Activated T-helper 2 cell treated with anti-CD3 and anti-CD28 coated beads, Interferon-gamma antibody, Interleukin-2, Interleukin-4, amounts not matched to agents 10 μg/mL and 5 μg/mL and 100 μg/mL, durations not matched to agents 14 hours and 24 hours and 36 hours (primary cell): ENCODE measurements at regions of chr2 and their contacts with region 1.

Region 1: DNA sequence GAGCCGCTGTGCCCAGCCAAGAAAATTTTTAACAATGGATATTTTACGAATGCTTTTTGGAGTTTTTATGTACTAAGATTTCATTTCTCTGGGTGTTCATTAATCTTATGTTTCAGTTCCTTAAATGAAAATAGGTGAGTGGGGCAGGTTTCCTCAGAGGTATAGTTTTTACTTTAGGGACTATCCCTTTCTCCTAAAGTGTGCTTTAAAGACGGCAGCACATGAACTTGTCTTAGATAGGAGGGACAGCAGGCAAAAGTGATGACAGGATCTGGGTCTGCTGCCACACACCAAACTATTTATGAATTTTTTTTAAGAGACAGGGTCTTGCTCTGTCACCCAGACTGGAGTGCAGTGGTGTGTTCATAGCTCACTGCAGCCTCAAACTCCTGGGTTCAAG is 8.0 kb upstream of the REL start:
- DNase-seq: no peak
- H3K4me3 Mint-ChIP-seq: no peak overlapping the region
- H3K27ac Mint-ChIP-seq: peak overlapping the region; percentile 69
- H3K4me1 Mint-ChIP-seq: peaks cover 26% of the 10 kb centered on the region
- H3K27me3 Mint-ChIP-seq: no peaks in the 10 kb centered on the region

Region 2: DNA sequence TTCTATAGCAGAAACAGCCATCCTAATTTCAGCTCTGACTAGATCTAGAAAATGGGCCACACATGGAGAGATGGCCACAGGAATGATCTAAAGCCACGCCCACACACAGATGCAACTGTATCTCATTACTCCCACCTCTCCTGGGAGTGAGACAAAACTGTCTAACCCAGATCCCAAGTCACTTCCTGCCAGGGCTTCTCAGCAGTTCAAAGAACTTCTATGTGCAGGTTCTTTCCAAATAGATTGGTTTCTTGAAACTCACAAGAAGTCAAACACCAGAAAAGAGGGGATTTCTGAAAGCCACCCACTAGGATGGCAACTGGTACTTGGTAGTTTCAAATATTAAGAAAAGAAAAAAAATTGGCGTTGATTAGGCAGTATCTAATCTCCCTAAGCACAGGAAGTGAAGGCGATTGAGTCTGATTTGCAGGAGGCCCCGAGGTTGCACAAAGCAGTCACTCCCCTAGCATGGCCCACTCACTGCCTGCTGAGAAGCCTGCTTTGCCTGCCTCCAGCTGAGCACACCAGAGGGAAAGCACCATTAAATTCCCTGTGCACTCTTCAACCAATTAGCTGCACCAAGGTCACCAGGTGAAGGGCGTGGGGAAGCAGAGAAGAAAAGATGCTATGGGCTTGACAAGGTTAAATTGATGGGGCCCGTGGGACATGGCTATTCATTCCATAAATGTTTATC is 66.2 kb before region 1 on chr2:
- intact Hi-C with region 1: loop called (anchors 1 kb)
- DNase-seq: no peak
- H3K4me3 Mint-ChIP-seq: peak overlapping the region; percentile 10
- H3K27ac Mint-ChIP-seq: peak overlapping the region; percentile 89
- H3K4me1 Mint-ChIP-seq: peaks cover 48% of the 10 kb centered on the region
- H3K27me3 Mint-ChIP-seq: no peaks in the 10 kb centered on the region

Region 3: DNA sequence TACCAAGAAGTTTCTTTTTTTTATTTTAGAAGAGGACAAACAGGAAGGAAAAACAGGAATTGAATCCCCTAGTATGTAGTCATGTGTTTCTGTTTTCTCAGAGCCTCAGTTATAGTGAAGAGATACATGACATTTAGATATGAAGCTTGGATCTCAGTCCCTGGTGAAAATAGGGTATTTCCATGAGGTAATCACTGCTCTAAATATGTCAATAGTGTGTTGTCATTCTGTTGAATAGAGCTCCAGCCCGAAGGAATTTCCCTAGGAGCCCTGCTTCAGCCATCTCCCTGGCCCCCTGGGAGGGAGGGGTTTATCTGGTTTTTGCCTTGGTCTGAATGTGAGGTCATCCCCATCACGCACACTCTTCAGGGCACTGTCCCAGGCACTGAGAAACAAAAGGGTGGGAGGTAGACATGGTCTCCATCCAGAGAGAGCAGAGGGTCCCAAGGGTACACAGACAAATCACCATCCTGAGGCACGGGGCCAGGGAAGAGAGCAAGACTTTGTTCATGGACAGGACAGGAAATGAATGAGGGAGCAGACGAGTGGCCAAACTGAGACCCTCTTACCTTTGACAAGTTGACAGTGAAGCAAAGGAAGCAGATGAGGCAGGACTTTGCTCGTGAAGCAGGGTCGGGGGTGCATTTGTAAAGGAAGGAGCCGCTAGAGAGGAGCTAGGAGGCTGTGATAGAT is 39.0 kb before region 1 on chr2:
- intact Hi-C with region 1: loop called (anchors 1 kb)
- DNase-seq: no peak
- H3K4me3 Mint-ChIP-seq: no peak overlapping the region
- H3K27ac Mint-ChIP-seq: peak overlapping the region; percentile 47
- H3K4me1 Mint-ChIP-seq: peaks cover 19% of the 10 kb centered on the region
- H3K27me3 Mint-ChIP-seq: no peaks in the 10 kb centered on the region

Region 4: DNA sequence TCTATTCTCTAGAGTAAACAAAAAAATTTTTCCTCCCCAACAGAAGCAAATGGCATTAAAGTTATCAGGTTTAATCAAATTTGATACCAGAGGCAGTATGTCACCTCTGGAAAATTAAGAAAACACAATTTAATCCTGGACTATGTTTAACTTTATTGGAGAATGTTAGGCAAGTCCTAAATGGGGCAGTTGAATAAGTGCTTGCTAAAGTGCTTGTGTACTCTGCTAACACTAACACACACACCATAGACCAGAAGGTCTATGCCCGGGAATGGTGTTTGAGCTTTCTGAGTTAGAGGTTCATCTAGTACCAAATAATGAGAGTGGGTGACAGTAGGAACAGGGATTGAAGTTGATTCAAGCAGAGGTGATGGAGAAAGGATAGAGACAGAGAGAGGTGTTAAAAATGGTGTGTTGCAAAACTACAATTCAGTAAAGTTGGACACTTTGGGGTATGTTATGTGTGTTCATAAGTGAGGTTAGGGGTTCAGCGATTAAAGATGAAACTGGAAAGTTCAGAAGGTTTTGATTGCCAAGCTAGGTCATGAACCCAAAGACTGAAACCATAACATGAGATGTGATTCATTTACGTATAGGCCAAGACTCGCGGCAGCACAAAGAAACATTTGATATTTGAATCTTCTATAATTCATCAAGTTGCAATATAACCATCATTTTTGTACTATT is 103.6 kb after region 1 on chr2:
- intact Hi-C with region 1: loop called (anchors 1 kb)
- DNase-seq: no peak
- H3K4me3 Mint-ChIP-seq: no peak overlapping the region
- H3K27ac Mint-ChIP-seq: peak overlapping the region; percentile 23
- H3K4me1 Mint-ChIP-seq: peaks cover 28% of the 10 kb centered on the region
- H3K27me3 Mint-ChIP-seq: no peaks in the 10 kb centered on the region

Region 5: GRCh38 chr2:61247204-61247812 is 373.9 kb after region 1 on chr2:
- intact Hi-C with region 1: no loop called
- DNase-seq: no peak
- H3K4me3 Mint-ChIP-seq: no peak overlapping the region
- H3K27ac Mint-ChIP-seq: no peak overlapping the region
- H3K4me1 Mint-ChIP-seq: peaks cover 4% of the 10 kb centered on the region
- H3K27me3 Mint-ChIP-seq: no peaks in the 10 kb centered on the region